ENCODE measurements at regions of chr3 and their contacts with region 1.

Region 1: GRCh38 chr3:51982782-51983577 is at the start of gene ACY1:
- DNase-seq: peak; percentile 72
- ATAC-seq: peak; percentile 79
- H3K4me3 ChIP-seq: peak within 1 kb of the TSS; percentile 47 to 68 (median 58)
- H3K4me3 Mint-ChIP-seq: peak within 1 kb of the TSS; percentile 92
- H3K27ac ChIP-seq: peak within 1 kb of the TSS; percentile 65 to 76
- H3K27ac Mint-ChIP-seq: peak within 1 kb of the TSS; percentile 93
- H3K4me1 ChIP-seq: peaks cover 10 to 19% of the 10 kb centered on the region in 2 donors
- H3K4me1 Mint-ChIP-seq: peaks cover 17% of the 10 kb centered on the region
- H3K27me3 ChIP-seq: no peaks in the 10 kb centered on the region
- H3K27me3 Mint-ChIP-seq: no peaks in the 10 kb centered on the region
- CTCF ChIP-seq: peak; percentile 46
- total RNA-seq, gene ACY1: 11.6 and 14.6 TPM in 2 replicates

Region 2: GRCh38 chr3:51995346-51996163 is 12.6 kb after region 1 on chr3 and contains the start of gene RPL29:
- CTCF ChIA-PET with region 1: interaction called, 25 read pairs
- POLR2A ChIA-PET with region 1: interaction called, 25 read pairs
- intact Hi-C with region 1: loop called (anchors 1 kb)
- DNase-seq: peak; percentile 95
- ATAC-seq: peak; percentile 98
- H3K4me3 ChIP-seq: peak within 1 kb of the TSS; percentile 89 to 99 (median 94)
- H3K4me3 Mint-ChIP-seq: peak within 1 kb of the TSS; percentile 100
- H3K27ac ChIP-seq: peak within 1 kb of the TSS; percentile 87 to 91
- H3K27ac Mint-ChIP-seq: peak within 1 kb of the TSS; percentile 100
- H3K4me1 ChIP-seq: peaks cover 13 to 19% of the 10 kb centered on the region in 2 donors
- H3K4me1 Mint-ChIP-seq: peaks cover 33% of the 10 kb centered on the region
- H3K27me3 ChIP-seq: no peaks in the 10 kb centered on the region
- H3K27me3 Mint-ChIP-seq: peaks cover 6% of the 10 kb centered on the region
- CTCF ChIP-seq: no peak
- total RNA-seq, gene RPL29: 1,460 and 1,552 TPM in 2 replicates

Region 3: GRCh38 chr3:52076896-52077780 is 94.2 kb after region 1 on chr3:
- CTCF ChIA-PET with region 1: no interaction called
- POLR2A ChIA-PET with region 1: no interaction called
- intact Hi-C with region 1: no loop called
- DNase-seq: no peak
- ATAC-seq: no peak
- H3K4me3 ChIP-seq: no peak overlapping the region
- H3K4me3 Mint-ChIP-seq: no peak overlapping the region
- H3K27ac ChIP-seq: no peak overlapping the region
- H3K27ac Mint-ChIP-seq: no peak overlapping the region
- H3K4me1 ChIP-seq: no peaks in the 10 kb centered on the region
- H3K4me1 Mint-ChIP-seq: no peaks in the 10 kb centered on the region
- H3K27me3 ChIP-seq: no peaks in the 10 kb centered on the region
- H3K27me3 Mint-ChIP-seq: no peaks in the 10 kb centered on the region
- CTCF ChIP-seq: no peak